ENCODE measurements at regions of chr12 and their contacts with region 1.

Region 1: GRCh38 chr12:30847259-30847658 is 79.3 kb upstream of the TSPAN11 start:
- DNase-seq: no peak
- H3K4me3 ChIP-seq: no peak overlapping the region
- CTCF ChIP-seq: peak; percentile 38

Region 2: GRCh38 chr12:30813525-30814294 is 33.5 kb before region 1 on chr12:
- CTCF ChIA-PET with region 1: no interaction called
- POLR2A ChIA-PET with region 1: no interaction called
- DNase-seq: no peak
- H3K4me3 ChIP-seq: no peak overlapping the region
- CTCF ChIP-seq: no peak

Region 3: DNA sequence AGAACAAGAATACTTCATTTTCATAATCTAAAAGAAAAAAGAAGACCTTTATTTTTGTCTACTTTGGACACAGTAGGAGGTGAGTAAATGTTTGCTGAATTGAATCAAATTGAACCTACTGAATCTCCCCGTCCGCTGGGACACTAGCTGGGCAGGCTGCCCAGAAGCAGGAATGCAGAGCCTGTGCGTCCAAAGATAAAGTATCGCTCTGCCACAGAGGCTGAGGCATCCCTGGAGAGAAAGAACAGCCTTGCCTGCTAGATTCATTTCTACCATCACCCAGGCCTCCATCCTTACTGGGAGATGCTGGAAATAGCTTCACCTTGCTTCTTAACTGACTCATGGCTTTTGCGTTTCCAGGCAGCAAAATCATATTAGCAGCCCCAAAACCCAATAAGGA is 15.2 kb after region 1 on chr12:
- CTCF ChIA-PET with region 1: interaction called, 14 read pairs
- POLR2A ChIA-PET with region 1: no interaction called
- DNase-seq: no peak
- H3K4me3 ChIP-seq: no peak overlapping the region
- CTCF ChIP-seq: no peak

Region 4: DNA sequence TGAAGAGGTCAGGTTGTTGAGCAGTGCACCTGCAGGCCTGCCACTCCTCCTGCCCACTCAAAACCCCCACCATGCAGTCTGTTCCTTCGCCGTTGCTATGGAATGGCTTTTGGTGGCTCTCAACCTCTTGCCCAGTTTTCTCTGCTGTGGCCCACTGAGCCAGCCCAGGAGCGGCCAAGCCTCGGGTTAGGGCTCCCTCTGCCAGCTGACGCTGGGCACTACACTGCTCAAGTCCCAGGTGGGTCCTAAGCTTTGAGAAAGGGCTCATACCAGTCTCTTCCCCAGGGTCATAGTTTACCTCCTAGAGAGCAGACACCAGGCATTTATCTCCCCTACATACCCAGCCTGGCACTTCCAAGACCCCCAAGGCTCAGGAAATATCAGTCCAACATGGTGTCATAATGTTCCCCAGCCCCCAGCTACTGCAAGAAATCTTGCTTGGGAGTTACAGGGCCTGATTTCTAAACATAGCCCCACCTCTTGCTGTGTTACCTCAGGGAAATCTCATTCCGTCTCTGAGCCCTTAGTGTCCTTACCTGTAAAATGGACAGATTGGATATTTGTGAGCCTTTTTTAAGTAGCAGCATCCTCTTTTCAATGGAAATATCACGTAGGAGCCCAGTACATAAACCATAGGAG is 138.7 kb after region 1 on chr12:
- CTCF ChIA-PET with region 1: interaction called, 252 read pairs
- POLR2A ChIA-PET with region 1: no interaction called
- DNase-seq: no peak
- H3K4me3 ChIP-seq: no peak overlapping the region
- CTCF ChIP-seq: peak; percentile 94

Region 5: GRCh38 chr12:31238764-31239387 is 391.6 kb after region 1 on chr12:
- CTCF ChIA-PET with region 1: interaction called, 77 read pairs
- POLR2A ChIA-PET with region 1: no interaction called
- DNase-seq: no peak
- H3K4me3 ChIP-seq: no peak overlapping the region; the same call in 1 of the 2 replicates
- CTCF ChIP-seq: peak; percentile 66